MCF 10A (cell line): ENCODE measurements at regions of chr12 and their contacts with region 1.

Region 1: GRCh38 chr12:95198914-95199313 is 18.4 kb downstream of the FGD6 start:
- DNase-seq: peak; percentile 45
- H3K4me3 Mint-ChIP-seq: peak overlapping the region; percentile 48
- H3K27ac Mint-ChIP-seq: peak overlapping the region; percentile 98
- H3K4me1 Mint-ChIP-seq: peaks cover 32% of the 10 kb centered on the region
- H3K27me3 Mint-ChIP-seq: no peaks in the 10 kb centered on the region
- CTCF ChIP-seq: no peak

Region 2: GRCh38 chr12:95151821-95152220 is 47.1 kb before region 1 on chr12:
- CTCF ChIA-PET with region 1: no interaction called
- POLR2A ChIA-PET with region 1: interaction called, 14 read pairs
- intact Hi-C with region 1: no loop called
- DNase-seq: no peak
- H3K4me3 Mint-ChIP-seq: no peak overlapping the region
- H3K27ac Mint-ChIP-seq: no peak overlapping the region
- H3K4me1 Mint-ChIP-seq: no peaks in the 10 kb centered on the region
- H3K27me3 Mint-ChIP-seq: no peaks in the 10 kb centered on the region
- CTCF ChIP-seq: no peak

Region 3: DNA sequence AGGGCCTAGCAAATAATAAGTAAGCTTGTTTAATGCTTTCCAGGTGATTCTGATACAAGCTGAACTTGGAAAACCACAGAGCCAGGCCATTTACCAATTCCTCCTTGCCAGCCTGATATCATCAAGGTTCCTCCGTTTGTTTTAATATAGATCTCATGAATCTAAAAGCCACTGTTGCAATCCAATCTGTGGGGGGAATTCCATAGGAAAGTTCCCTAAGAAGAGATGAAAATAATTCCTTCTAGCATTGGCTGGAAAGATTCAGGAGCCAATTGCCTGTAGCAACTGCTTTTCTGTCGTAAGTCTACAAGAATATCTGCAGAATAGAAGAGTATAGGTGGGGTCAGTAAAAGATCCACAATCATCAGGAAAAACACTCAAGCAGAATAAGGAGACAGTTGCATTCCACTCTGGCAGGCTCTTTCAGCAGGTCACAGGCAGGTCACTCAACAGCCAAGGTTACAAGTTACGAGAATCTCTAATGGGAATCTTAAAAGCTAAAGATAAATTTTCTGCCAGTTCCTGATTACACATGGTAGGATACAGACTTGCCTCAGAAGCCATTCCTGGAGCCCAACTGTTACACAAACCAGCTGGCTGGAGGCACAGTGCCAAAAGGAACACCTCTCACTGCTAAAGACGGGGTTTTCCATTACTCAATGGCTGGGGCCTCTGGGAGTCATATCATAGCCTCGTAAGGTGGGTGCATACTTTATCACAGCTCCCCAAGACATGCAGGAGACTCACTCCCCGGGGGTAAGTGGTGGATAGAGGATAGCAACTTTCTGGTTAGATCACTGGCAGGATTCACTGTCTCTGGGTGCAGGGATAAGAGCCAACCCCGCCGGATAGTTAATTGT is 25.3 kb before region 1 on chr12:
- CTCF ChIA-PET with region 1: interaction called, 5 read pairs
- POLR2A ChIA-PET with region 1: interaction called, 48 read pairs
- intact Hi-C with region 1: no loop called
- DNase-seq: peak; percentile 92
- H3K4me3 Mint-ChIP-seq: no peak overlapping the region
- H3K27ac Mint-ChIP-seq: peak overlapping the region; percentile 31
- H3K4me1 Mint-ChIP-seq: peaks cover 26% of the 10 kb centered on the region
- H3K27me3 Mint-ChIP-seq: no peaks in the 10 kb centered on the region
- CTCF ChIP-seq: no peak

Region 4: DNA sequence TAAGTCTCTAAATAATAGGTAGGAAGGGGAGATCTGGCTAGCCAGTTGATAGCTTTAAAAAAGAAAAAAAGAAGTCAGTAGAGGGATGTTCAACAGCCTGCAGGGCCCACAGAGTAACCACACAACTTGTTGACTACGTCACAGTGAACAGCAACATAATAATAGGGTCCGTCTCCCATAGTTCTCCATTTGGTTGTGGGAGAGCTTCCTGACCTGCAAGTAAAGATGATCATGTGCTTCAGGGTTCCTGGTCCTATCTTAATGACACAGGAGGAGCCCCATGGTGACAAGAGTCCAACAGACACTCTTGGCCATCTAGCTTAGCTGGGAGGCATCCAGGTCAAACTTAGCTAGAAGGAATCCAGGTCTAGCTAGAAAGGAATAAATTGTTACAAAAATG is 17.8 kb before region 1 on chr12:
- CTCF ChIA-PET with region 1: interaction called, 3 read pairs
- POLR2A ChIA-PET with region 1: interaction called, 77 read pairs
- intact Hi-C with region 1: no loop called
- DNase-seq: no peak
- H3K4me3 Mint-ChIP-seq: no peak overlapping the region
- H3K27ac Mint-ChIP-seq: no peak overlapping the region
- H3K4me1 Mint-ChIP-seq: peaks cover 8% of the 10 kb centered on the region
- H3K27me3 Mint-ChIP-seq: no peaks in the 10 kb centered on the region
- CTCF ChIP-seq: no peak